Ascending aorta (tissue), 2 donors: ENCODE measurements at regions of chr18 and their contacts with region 1.

Region 1: GRCh38 chr18:11851146-11851805 is at the start of gene CHMP1B:
- DNase-seq: peak; percentile 94 to 99
- H3K4me3 ChIP-seq: peak within 1 kb of the TSS; percentile 75 to 86
- H3K27ac ChIP-seq: peak within 1 kb of the TSS; percentile 87 to 92
- H3K4me1 ChIP-seq: peaks cover 4 to 20% of the 10 kb centered on the region in 2 donors
- H3K27me3 ChIP-seq: no peaks in the 10 kb centered on the region
- CTCF ChIP-seq: no peak
- total RNA-seq, gene CHMP1B: 25.5 TPM

Region 2: DNA sequence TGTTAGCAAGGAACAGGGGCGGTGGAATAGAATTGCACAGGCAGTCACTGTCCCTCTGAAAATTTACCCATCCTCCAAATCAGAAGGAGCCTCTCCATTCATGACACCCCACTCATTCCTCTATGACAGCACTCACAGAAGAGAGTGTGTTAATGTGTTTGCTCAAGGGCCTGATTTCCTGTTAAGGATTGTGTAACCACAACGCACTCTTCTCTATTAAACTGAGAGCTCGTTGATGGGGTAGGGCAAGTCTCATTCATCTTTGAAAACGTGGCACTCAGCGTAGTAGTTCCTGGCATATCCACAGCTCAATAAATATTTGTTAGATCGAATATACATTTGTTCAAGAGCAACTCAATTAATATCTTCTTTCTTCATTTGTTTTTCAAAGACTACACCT is 1831.1 kb before region 1 on chr18:
- intact Hi-C with region 1: loop called (anchors 10 kb)
- DNase-seq: peak in 1 of 2 donors; percentile 44
- H3K4me3 ChIP-seq: no peak overlapping the region
- H3K27ac ChIP-seq: no peak overlapping the region
- H3K4me1 ChIP-seq: peaks cover 10 to 27% of the 10 kb centered on the region in 2 donors
- H3K27me3 ChIP-seq: no peaks in the 10 kb centered on the region
- CTCF ChIP-seq: no peak

Region 3: DNA sequence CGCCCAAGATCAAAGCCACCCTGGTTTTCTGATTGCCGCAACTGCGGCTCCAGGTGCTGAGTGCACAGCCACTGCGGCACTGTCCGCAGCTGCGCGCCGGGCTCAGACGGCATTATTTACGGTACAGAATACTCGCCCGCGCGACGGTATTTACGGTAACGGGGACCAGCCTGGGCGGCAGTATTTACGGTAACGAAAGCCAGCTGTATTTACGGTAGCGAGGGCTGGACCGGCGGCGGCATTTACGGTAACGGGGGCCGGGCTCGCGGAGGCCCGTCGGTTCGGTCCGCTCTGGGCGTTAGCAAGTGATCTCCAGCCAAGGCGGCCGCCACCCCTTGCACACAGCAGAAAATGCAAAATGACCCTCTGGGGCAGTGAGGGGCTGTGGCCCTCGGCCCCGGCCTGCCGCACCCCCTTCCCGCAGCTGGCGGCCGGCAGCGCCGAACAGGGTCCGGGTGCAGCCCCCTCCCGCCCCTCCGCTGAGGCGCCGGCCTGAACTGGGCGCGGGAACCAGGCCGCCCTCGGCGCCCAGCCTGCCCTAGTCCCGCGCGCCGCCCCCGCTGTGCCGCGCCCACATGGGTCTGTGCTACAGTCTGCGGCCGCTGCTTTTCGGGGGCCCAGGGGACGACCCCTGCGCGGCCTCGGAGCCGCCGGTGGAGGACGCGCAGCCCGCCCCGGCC is 162.1 kb before region 1 on chr18 and contains the start of gene GNAL:
- intact Hi-C with region 1: loop called (anchors 2 kb)
- DNase-seq: peak in 1 of 2 donors; percentile 90
- H3K4me3 ChIP-seq: peak within 1 kb of the TSS; percentile 57 to 98
- H3K27ac ChIP-seq: peak within 1 kb of the TSS; percentile 72 to 89
- H3K4me1 ChIP-seq: peaks cover 0 to 3% of the 10 kb centered on the region in 2 donors
- H3K27me3 ChIP-seq: no peaks in the 10 kb centered on the region
- CTCF ChIP-seq: no peak
- total RNA-seq, gene GNAL: 5.9 TPM

Region 4: DNA sequence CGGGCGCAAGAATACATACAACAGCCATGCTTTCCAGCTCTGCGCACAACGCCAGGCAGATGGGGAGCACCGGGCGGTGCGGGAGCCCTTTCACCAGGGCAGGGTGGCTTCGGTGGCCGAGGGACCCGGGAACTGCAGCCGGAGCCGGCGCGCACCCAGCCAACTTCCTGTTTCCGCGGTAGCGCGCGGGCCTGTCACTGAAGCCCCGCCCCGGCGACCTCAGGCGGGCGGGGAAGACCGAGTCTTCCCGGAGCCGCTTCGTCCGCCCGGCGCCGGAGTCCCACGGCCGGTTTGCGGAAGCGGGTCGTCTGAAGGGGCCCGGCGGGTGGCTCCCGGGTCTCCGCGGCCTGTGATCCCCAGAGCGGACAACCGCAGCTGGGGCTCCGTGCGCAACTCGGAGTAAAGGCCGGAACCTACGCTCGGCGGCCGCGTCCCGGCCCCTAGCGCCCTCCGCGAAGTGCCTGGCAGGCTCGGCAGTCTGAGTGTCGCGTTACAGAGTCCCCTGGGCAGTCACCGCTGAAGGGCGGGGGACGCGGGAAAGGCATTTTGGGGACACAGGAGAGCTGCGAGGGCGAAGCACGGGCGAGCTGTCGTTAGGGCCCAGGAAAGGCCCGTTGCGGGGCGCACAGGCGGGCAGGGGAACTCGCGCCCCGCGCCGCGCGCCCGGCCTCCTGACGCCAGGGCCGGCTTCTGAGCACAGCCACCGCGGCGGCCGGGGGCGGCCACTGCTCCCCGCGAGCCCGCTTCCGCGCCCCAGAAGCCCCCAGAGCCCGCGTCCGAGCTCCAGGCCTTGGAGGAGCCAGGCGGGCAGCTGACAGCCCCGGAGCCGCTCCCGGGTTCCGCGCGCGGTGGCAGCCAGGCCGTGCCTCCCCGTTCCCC is 57.1 kb after region 1 on chr18 and contains the start of gene MPPE1:
- intact Hi-C with region 1: loop called (anchors 1 kb)
- DNase-seq: peak; percentile 49 to 95
- H3K4me3 ChIP-seq: peak within 1 kb of the TSS; percentile 77 to 94
- H3K27ac ChIP-seq: peak within 1 kb of the TSS; percentile 99 to 100
- H3K4me1 ChIP-seq: peaks cover 0 to 10% of the 10 kb centered on the region in 2 donors
- H3K27me3 ChIP-seq: no peaks in the 10 kb centered on the region
- CTCF ChIP-seq: no peak
- total RNA-seq, gene MPPE1: 18.9 TPM

Region 5: DNA sequence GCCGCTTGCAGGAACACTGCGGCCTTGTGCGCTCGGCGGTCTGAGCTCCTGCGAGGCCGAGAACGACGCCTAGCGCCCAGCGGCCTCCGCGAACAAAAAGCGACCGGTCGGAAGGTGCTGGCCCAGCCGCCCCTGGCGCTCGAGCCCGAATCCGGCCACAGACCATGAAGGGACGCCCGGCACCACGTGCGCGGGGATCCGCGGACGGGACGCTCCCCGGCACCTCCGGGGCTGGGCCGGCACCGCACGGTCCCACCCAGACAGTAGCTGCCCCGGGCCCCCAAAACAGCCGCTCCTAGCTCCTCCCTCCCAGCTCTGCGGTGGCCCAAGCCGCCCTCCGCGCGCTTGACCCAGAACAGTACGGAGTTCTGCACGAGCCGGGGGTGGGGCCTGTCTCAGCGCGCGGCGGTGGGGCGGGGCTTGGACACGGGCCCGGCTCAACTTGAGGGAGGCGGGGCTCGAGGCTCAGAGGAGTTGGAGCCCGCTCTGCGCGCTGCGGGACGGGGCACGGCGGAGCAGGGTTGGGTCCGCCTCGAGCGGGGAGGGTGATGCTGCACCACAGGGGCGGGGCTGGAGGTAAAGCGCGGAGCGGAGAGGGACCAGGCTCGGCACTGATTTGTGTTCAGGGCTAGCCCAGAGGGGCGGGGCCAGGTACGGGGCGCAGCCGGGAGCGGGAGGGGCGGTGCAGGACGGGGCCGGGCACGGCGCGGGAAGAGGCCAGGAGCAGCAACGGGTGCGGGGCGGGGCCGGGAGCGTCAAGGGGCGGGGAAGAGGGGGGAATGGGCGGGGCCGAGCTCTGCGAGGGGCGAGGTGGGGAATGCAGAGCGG is 129.5 kb after region 1 on chr18:
- intact Hi-C with region 1: loop called (anchors 2 kb)
- DNase-seq: peak; percentile 95 to 99
- H3K4me3 ChIP-seq: peak overlapping the region; percentile 59 to 100
- H3K27ac ChIP-seq: peak overlapping the region; percentile 87 to 92
- H3K4me1 ChIP-seq: peaks cover 0 to 12% of the 10 kb centered on the region in 2 donors
- H3K27me3 ChIP-seq: no peaks in the 10 kb centered on the region
- CTCF ChIP-seq: peak in 1 of 3 experiments; percentile 32

Region 6: GRCh38 chr18:12121175-12122042 is 270.1 kb after region 1 on chr18:
- intact Hi-C with region 1: no loop called
- DNase-seq: no peak
- H3K4me3 ChIP-seq: no peak overlapping the region
- H3K27ac ChIP-seq: no peak overlapping the region
- H3K4me1 ChIP-seq: no peaks in the 10 kb centered on the region
- H3K27me3 ChIP-seq: no peaks in the 10 kb centered on the region
- CTCF ChIP-seq: no peak

Region 7: GRCh38 chr18:12308386-12309100 is 457.3 kb after region 1 on chr18:
- intact Hi-C with region 1: loop called (anchors 10 kb)
- DNase-seq: peak; percentile 29 to 95
- H3K4me3 ChIP-seq: peak overlapping the region; percentile 72 to 95
- H3K27ac ChIP-seq: peak overlapping the region; percentile 97 to 98
- H3K4me1 ChIP-seq: peaks cover 15 to 20% of the 10 kb centered on the region in 2 donors
- H3K27me3 ChIP-seq: no peaks in the 10 kb centered on the region
- CTCF ChIP-seq: no peak